HepG2 (cell line): ENCODE measurements at regions of chr3 and their contacts with region 1.

Region 1: GRCh38 chr3:129627429-129628168 is 21.1 kb upstream of the PLXND1 start:
- DNase-seq: peak; percentile 77
- ATAC-seq: peak; percentile 48
- H3K4me3 ChIP-seq: peak overlapping the region; percentile 67 to 97 (median 76)
- H3K27ac ChIP-seq: peak overlapping the region; percentile 95
- H3K4me1 ChIP-seq: peaks cover 63% of the 10 kb centered on the region
- H3K27me3 ChIP-seq: no peaks in the 10 kb centered on the region; a peak in 1 of 5 replicates
- CTCF ChIP-seq: peak; percentile 87
- EP300 ChIP-seq: no peak
- POLR2A ChIP-seq: peak in 1 of 2 experiments; percentile 61; a peak in 2 of 4 replicates
- RAD21 ChIP-seq: peak; percentile 92

Region 2: DNA sequence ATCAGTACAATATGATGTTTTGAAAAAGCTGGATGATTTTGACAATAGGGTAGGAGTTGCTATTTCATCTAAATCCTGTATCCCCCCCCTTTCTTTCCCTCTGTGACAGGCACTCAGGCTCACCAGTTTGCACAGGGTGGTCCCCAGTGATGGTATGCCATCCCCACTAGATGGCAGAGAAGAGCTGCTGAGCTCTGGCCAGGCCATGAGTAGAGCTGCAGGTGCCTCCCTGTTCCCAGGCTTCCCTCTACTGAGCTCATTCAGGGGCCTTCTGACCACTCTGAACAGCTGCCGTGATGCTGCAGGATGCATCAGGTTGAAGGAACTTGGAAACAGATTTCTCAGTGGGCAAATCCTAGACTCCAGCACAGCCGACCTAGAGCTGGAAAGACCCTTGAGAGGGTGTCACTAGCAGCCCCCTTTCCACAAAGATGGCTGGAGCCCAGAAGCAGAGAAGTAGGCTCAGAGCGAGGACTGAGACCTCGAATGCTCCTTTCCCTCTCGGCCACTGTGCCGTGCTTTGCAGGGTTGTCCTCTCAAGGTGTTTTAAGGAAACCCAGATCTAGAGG is 244.2 kb before region 1 on chr3:
- CTCF ChIA-PET with region 1: no interaction called
- POLR2A ChIA-PET with region 1: interaction called, 3 read pairs
- in situ Hi-C with region 1: no loop called
- intact Hi-C with region 1: loop called (anchors 10 kb)
- DNase-seq: peak; percentile 74
- ATAC-seq: peak; percentile 94
- H3K4me3 ChIP-seq: no peak overlapping the region
- H3K27ac ChIP-seq: no peak overlapping the region
- H3K4me1 ChIP-seq: peaks cover 28% of the 10 kb centered on the region
- H3K27me3 ChIP-seq: no peaks in the 10 kb centered on the region
- CTCF ChIP-seq: peak; percentile 93
- EP300 ChIP-seq: no peak
- POLR2A ChIP-seq: no peak
- RAD21 ChIP-seq: peak; percentile 95

Region 3: DNA sequence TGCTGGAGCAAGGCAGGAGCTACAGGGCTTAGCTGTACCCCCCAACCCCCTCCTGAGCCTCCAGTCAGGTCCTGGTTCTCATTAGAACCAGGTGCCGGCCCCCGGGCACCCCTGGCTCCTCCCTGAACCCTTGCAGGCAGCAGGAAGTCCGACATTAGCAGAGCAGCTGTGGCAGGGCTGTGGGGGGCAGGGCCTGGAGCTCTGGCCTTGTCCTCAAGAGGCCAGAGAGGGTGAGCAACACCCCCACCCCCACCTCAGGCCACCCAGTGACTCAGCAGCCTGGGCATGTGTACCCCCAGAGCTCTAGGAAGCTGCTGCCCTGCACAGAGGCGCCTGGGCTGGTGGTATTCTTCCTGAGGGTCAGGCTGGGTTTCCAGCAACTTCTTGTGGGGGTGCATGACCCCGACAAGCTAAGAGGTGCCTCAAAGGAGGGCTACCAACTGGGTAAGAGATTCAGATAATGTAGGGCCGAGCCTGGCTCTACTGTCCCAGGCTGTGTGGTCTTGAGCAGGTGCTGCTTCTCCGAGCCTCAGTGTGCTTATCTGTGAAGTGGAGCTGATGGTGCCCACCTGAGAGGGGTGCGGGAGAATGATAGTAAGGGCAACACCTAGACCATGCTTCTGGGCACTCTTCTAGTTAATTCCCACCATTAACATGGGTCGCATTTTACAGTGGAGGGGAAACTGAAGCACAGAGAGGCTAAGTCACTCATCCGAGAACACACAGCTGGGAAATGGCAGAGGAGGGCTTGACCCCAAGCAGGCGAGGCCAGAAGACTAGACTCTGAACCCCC is 68.6 kb before region 1 on chr3:
- CTCF ChIA-PET with region 1: no interaction called
- POLR2A ChIA-PET with region 1: interaction called, 10 read pairs
- in situ Hi-C with region 1: no loop called
- intact Hi-C with region 1: no loop called
- DNase-seq: peak; percentile 74
- ATAC-seq: peak; percentile 70
- H3K4me3 ChIP-seq: no peak overlapping the region; a peak in 1 of 6 replicates
- H3K27ac ChIP-seq: peak overlapping the region; percentile 69
- H3K4me1 ChIP-seq: peaks cover 34% of the 10 kb centered on the region
- H3K27me3 ChIP-seq: no peaks in the 10 kb centered on the region; a peak in 1 of 5 replicates
- CTCF ChIP-seq: no peak
- EP300 ChIP-seq: peak; percentile 52 to 70; a peak in 3 of 4 replicates
- POLR2A ChIP-seq: no peak
- RAD21 ChIP-seq: peak; percentile 25; the same call in 1 of the 2 replicates

Region 4: DNA sequence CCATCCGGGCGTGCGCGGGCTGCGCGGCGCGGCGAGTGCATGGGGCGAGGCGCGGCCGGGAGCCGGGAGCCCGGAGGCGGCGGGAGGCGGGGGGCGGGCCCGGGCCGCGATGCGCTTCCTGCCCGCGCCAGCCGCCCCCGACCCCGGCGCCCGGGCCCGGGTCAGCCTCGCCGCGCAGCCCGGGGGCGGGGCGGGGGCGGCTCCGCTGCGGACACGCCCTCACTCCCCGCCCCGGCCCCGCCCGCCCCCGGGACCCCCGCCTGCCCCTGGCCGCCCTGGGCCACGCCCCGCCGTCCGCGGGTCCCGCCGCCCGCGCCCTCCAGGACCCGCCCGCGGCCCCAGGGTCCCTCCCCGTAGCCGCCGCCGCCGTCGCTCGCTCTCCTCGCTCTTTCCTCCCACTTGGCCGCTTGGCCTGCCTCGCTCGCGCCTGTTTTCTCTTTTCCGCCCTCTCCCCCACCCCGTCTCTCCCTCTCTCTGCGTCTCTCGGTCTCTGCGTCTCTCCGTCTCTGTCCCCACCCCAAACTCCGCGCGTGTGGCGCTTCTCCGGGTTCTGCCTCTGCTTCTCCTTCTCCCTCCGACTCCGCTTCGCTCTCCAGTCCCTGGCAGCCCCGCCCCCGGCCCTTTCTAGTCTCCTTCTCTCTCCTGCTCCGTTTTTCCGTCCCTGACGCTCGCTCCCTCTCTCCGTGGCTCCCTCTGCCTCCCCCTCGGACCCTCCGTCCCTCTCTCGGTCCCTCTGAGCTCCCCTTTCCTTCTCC is 20.8 kb before region 1 on chr3 and contains the start of gene PLXND1:
- CTCF ChIA-PET with region 1: no interaction called
- POLR2A ChIA-PET with region 1: interaction called, 26 read pairs
- in situ Hi-C with region 1: no loop called
- intact Hi-C with region 1: loop called (anchors 2 kb)
- DNase-seq: no peak
- ATAC-seq: peak; percentile 54
- H3K4me3 ChIP-seq: peak within 1 kb of the TSS; percentile 77 to 92 (median 91)
- H3K27ac ChIP-seq: peak within 1 kb of the TSS; percentile 62
- H3K4me1 ChIP-seq: peaks cover 74% of the 10 kb centered on the region
- H3K27me3 ChIP-seq: no peaks in the 10 kb centered on the region; a peak in 1 of 5 replicates
- CTCF ChIP-seq: 0 out of 2 replicates have a peak, but pooled peaks have one; percentile 8
- EP300 ChIP-seq: no peak
- POLR2A ChIP-seq: no peak
- RAD21 ChIP-seq: no peak
- total RNA-seq, gene PLXND1: 15.9 and 25.3 TPM in 2 replicates

Region 5: GRCh38 chr3:129824926-129825541 is 197.4 kb after region 1 on chr3:
- CTCF ChIA-PET with region 1: interaction called, 23 read pairs
- POLR2A ChIA-PET with region 1: interaction called, 4 read pairs
- in situ Hi-C with region 1: loop called (anchors 5 kb)
- intact Hi-C with region 1: loop called (anchors 1 kb)
- DNase-seq: peak; percentile 62
- ATAC-seq: peak; percentile 75
- H3K4me3 ChIP-seq: no peak overlapping the region
- H3K27ac ChIP-seq: no peak overlapping the region
- H3K4me1 ChIP-seq: peaks cover 20% of the 10 kb centered on the region
- H3K27me3 ChIP-seq: no peaks in the 10 kb centered on the region
- CTCF ChIP-seq: peak; percentile 83
- EP300 ChIP-seq: no peak
- POLR2A ChIP-seq: no peak
- RAD21 ChIP-seq: peak; percentile 72